HepG2 (cell line): ENCODE measurements at regions of chr13 and their contacts with region 1.

Region 1: GRCh38 chr13:30480292-30480950 is 14.7 kb upstream of the HMGB1 start:
- DNase-seq: no peak
- ATAC-seq: no peak
- H3K4me3 ChIP-seq: no peak overlapping the region
- H3K27ac ChIP-seq: no peak overlapping the region
- H3K4me1 ChIP-seq: peaks cover 12% of the 10 kb centered on the region
- H3K27me3 ChIP-seq: no peaks in the 10 kb centered on the region
- CTCF ChIP-seq: no peak
- EP300 ChIP-seq: no peak
- POLR2A ChIP-seq: no peak
- RAD21 ChIP-seq: no peak

Region 2: DNA sequence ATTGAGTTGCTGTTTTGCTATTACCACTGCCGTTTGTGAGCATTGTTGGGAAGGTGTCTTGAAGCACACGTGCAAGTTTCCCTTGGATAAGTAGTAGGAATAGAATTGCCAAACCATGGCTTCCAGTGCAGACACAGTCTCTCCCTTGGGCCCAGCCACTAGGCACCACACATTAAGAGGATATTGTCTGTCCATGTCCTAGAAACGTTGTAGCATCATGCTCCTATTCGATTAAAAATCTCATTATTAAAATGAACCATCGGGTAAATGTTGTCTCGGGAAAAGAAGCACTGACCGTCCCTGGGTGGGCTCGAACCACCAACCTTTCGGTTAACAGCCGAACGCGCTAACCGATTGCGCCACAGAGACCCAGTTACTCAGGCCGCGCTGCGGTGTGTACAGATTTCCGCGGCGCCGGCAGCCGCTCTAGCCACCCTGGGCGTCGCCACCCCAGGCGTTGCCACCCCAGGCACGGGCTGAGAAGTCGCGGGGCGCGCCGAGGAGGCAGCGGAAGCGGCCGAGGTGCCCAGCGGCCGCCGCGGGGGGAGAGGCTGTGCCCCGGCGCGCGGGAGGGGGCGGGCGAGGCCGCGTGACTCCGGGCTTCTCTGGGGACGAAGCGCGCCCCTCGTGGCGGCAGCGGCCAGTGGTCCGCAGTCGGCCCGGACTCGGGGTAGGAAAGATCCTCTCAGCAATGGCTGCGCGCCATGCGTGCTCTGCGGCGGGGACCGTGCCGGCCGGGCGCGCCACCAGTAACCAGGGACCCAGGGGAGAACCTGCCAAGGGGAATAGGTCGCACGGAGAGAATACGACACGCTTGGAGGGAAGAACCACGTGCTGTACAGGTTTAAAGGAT is 193.5 kb after region 1 on chr13:
- CTCF ChIA-PET with region 1: no interaction called
- POLR2A ChIA-PET with region 1: no interaction called
- in situ Hi-C with region 1: no loop called
- intact Hi-C with region 1: loop called (anchors 5 kb)
- DNase-seq: peak; percentile 76
- ATAC-seq: peak; percentile 95
- H3K4me3 ChIP-seq: peak overlapping the region; percentile 58 to 73 (median 68)
- H3K27ac ChIP-seq: peak overlapping the region; percentile 65
- H3K4me1 ChIP-seq: peaks cover 27% of the 10 kb centered on the region
- H3K27me3 ChIP-seq: no peaks in the 10 kb centered on the region
- CTCF ChIP-seq: peak; percentile 79
- EP300 ChIP-seq: peak in 1 of 2 experiments; percentile 67; a peak in 2 of 4 replicates
- POLR2A ChIP-seq: peak; percentile 38 to 52; a peak in 2 of 4 replicates
- RAD21 ChIP-seq: peak; percentile 84

Region 3: DNA sequence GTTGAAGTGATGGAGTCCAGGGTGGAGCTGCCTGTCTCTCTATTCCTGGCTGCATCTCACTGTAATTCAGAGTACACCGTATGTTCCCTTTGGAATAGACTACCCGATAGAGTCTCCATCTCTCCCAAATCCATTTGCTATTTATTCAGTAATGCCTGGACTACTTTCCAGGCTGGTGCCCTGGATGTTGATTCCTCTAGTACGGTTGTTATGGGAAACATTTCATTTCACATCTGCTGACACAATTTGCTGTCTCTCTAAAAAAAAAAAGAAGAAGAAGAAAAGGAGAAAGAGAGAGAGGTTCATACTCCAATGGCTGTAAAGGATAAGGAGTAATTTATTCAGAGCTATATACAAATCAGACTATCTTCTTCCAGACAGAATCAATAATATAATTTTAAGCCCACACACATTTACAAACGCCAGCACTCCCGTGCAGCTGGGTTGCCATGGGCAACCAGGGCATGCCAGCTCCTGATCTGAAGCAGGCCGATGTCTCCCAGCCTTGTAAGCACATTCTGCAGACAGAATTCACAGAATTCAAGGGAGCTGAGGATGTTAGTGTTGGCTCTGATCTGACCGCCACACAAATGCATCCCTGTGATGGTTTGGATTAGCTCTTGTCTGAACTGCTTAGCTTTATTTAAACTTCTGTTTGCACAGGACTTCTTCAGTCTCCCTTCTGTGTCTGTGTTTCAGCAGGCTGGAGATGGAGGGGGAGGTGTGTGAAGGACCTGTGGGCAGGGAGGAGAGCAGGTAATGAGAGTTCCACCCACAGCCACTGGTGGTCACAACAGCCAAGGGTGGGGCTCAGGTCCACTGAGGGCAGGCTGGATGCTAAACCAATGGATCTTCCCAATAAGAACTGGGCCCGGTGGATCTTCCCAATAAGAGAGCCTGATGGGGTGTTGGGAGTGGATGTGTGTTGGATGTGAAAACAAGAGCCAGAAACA is 518.0 kb after region 1 on chr13:
- CTCF ChIA-PET with region 1: no interaction called
- POLR2A ChIA-PET with region 1: no interaction called
- in situ Hi-C with region 1: no loop called
- intact Hi-C with region 1: no loop called
- DNase-seq: no peak
- ATAC-seq: no peak
- H3K4me3 ChIP-seq: no peak overlapping the region
- H3K27ac ChIP-seq: no peak overlapping the region
- H3K4me1 ChIP-seq: 0 out of 2 replicates have a peak, but pooled peaks cover 7% of the 10 kb centered on the region
- H3K27me3 ChIP-seq: no peaks in the 10 kb centered on the region; a peak in 1 of 5 replicates
- CTCF ChIP-seq: no peak
- EP300 ChIP-seq: no peak
- POLR2A ChIP-seq: no peak
- RAD21 ChIP-seq: no peak